ENCODE measurements at regions of chr19 and their contacts with region 1.

Region 1: DNA sequence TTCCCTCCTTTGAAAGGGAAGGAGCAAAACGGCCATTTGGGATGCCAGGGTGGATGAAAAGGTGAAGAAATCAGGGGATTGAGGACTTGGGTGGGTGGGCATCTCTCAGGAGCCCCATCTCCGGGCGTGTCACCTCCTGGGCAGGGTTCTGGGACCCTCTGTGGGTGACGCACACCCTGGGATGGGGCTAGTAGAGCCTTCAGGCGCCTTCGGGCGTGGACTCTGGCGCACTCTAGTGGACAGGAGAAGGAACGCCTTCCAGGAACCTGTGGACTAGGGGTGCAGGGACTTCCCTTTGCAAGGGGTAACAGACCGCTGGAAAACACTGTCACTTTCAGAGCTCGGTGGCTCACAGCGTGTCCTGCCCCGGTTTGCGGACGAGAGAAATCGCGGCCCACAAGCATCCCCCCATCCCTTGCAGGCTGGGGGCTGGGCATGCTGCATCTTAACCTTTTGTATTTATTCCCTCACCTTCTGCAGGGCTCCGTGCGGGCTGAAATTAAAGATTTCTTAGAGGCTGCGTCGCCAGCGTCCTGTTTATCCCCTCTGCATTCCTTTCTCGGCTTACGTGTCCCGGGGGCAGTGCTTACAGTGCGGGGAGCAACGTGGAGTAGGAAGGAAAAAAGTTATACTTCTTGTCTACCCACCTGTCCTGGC is 15.2 kb upstream of the S1PR4 start:
- DNase-seq: peak; percentile 85 to 91 (median 90)
- ATAC-seq: peak; percentile 99
- H3K4me3 ChIP-seq: no peak overlapping the region
- H3K27ac ChIP-seq: no peak overlapping the region
- H3K4me1 ChIP-seq: peaks cover 4 to 13% of the 10 kb centered on the region in 2 experiments; a peak in 3 of 5 replicates
- H3K27me3 ChIP-seq: no peaks in the 10 kb centered on the region
- CTCF ChIP-seq: peak; percentile 94 to 95 (median 95)
- EP300 ChIP-seq: no peak
- POLR2A ChIP-seq: no peak
- RAD21 ChIP-seq: peak; percentile 90 to 95

Region 2: GRCh38 chr19:3003046-3003445 is 160.3 kb before region 1 on chr19:
- CTCF ChIA-PET with region 1: no interaction called
- POLR2A ChIA-PET with region 1: no interaction called
- in situ Hi-C with region 1: no loop called
- intact Hi-C with region 1: no loop called
- DNase-seq: no peak
- ATAC-seq: no peak
- H3K4me3 ChIP-seq: no peak overlapping the region
- H3K27ac ChIP-seq: no peak overlapping the region
- H3K4me1 ChIP-seq: peaks cover 0 to 19% of the 10 kb centered on the region in 2 experiments; a peak in 2 of 5 replicates
- H3K27me3 ChIP-seq: no peaks in the 10 kb centered on the region; a peak in 1 of 5 replicates
- CTCF ChIP-seq: no peak
- EP300 ChIP-seq: no peak
- POLR2A ChIP-seq: no peak
- RAD21 ChIP-seq: no peak

Region 3: GRCh38 chr19:3129112-3129511 is 34.2 kb before region 1 on chr19:
- CTCF ChIA-PET with region 1: interaction called, 4 read pairs
- POLR2A ChIA-PET with region 1: no interaction called
- in situ Hi-C with region 1: no loop called
- intact Hi-C with region 1: loop called (anchors 1 kb)
- DNase-seq: peak in 1 of 4 experiments; percentile 57
- ATAC-seq: no peak
- H3K4me3 ChIP-seq: no peak overlapping the region
- H3K27ac ChIP-seq: no peak overlapping the region
- H3K4me1 ChIP-seq: peaks cover 13 to 26% of the 10 kb centered on the region in 2 experiments
- H3K27me3 ChIP-seq: no peaks in the 10 kb centered on the region
- CTCF ChIP-seq: peak in 2 of 3 experiments; percentile 48 to 71; a peak in 4 of 6 replicates
- EP300 ChIP-seq: no peak
- POLR2A ChIP-seq: no peak
- RAD21 ChIP-seq: peak; percentile 46 to 67

Region 4: GRCh38 chr19:3346677-3347353 is 183.5 kb after region 1 on chr19:
- CTCF ChIA-PET with region 1: no interaction called
- POLR2A ChIA-PET with region 1: no interaction called
- in situ Hi-C with region 1: no loop called
- intact Hi-C with region 1: no loop called
- DNase-seq: no peak
- ATAC-seq: no peak
- H3K4me3 ChIP-seq: no peak overlapping the region
- H3K27ac ChIP-seq: no peak overlapping the region
- H3K4me1 ChIP-seq: peaks cover 0 to 25% of the 10 kb centered on the region in 2 experiments; a peak in 3 of 5 replicates
- H3K27me3 ChIP-seq: no peaks in the 10 kb centered on the region
- CTCF ChIP-seq: no peak
- EP300 ChIP-seq: no peak
- POLR2A ChIP-seq: no peak
- RAD21 ChIP-seq: no peak

Region 5: GRCh38 chr19:3471954-3472655 is 308.7 kb after region 1 on chr19:
- CTCF ChIA-PET with region 1: no interaction called
- POLR2A ChIA-PET with region 1: no interaction called
- in situ Hi-C with region 1: no loop called
- intact Hi-C with region 1: no loop called
- DNase-seq: peak; percentile 58 to 81 (median 78)
- ATAC-seq: peak; percentile 84
- H3K4me3 ChIP-seq: no peak overlapping the region
- H3K27ac ChIP-seq: no peak overlapping the region
- H3K4me1 ChIP-seq: peaks cover 0 to 10% of the 10 kb centered on the region in 2 experiments; a peak in 2 of 5 replicates
- H3K27me3 ChIP-seq: no peaks in the 10 kb centered on the region
- CTCF ChIP-seq: peak; percentile 73 to 89 (median 88)
- EP300 ChIP-seq: no peak
- POLR2A ChIP-seq: no peak
- RAD21 ChIP-seq: peak; percentile 59 to 90